B cell (primary cell): ENCODE measurements at regions of chr20 and their contacts with region 1.

Region 1: DNA sequence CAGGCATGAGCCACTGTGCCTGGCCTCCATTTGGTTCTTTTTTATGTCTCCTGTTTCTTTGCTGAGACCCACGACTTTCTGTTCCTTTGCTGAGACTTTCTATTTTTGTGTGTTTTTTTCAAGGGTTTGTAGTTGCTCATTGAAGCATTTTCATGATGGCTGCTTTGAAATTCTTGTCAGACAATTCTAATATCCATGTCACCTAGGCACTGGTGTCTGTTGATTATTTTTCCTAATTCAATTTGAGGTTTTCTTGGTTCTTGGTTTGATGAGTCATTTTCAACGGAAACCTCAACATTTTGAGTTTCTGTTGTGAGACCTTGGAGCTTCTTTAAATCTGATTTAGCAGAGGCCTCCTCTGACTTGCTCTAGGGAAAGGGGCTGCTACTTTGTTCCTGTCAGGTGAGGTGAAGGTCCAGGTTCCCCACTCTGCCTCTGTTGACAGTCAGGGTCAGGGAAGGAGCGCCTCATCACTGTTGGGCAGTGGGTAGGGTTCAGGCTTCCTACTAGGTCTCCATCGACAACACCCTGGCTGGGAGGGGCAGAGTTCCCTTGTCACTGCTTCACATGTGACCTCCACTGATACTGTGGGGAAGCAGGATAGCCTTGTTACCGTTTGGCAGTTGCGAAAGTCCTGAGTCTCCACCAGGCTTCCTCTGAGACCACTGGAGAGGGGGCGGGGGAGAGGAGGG is 67.2 kb upstream of the RNF24 start:
- DNase-seq: peak; percentile 39
- ATAC-seq: peak; percentile 50
- H3K4me3 ChIP-seq: peak overlapping the region in 1 of 5 experiments; percentile 15
- H3K4me3 Mint-ChIP-seq: peak overlapping the region; percentile 70
- H3K27ac ChIP-seq: peak overlapping the region; percentile 3 to 11
- H3K27ac Mint-ChIP-seq: peak overlapping the region; percentile 74
- H3K4me1 ChIP-seq: peaks cover 17 to 23% of the 10 kb centered on the region in 2 donors
- H3K4me1 Mint-ChIP-seq: peaks cover 31% of the 10 kb centered on the region
- H3K27me3 ChIP-seq: no peaks in the 10 kb centered on the region
- H3K27me3 Mint-ChIP-seq: peaks cover 23% of the 10 kb centered on the region
- CTCF ChIP-seq: no peak

Region 2: DNA sequence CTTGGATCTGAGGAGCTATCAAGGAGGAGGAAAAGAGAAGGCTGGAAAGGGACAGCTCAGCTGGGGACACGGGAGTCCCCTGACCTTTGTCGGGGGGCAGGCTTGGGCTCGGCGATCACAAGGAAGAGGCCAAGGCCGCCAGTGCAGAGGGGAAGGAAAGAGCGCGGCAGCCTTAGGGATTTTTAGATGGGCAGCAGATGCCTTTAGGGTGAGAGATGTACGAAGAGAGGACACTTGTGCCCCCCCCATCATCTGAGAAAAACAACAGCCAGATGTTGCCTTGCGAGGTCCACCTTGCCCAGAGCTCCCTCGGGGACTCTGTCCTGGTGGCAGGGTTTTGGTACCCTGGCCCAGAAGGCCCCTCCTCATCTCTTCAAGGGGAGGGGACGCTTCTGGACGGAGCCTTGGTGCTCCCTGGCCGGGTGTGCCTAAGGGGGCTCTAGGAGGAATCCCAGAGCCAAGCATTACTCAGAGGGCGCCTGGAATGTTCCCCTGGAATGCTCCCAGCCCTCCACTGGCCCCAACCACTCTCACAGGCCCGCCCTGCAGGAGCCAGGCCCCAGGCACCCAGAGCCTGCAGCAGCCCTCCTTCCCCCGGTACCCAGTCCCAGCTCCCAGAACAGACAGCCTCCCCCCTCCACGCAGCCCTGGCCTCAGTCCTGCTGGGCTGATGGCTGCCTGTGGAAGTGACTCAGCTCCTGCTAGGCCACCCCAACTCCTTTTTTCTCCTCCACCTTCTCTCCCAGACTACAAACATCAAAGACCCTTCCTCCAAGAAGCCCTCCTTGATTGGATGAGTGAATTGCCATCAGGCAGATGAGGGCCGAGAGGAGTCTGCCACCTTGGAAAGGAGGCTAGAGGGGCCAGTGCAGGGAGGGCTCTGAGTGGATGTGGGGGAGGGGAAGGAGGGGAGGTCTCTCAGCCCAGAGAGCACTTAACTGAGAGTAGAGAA is 402.5 kb before region 1 on chr20:
- CTCF ChIA-PET with region 1: interaction called, 20 read pairs
- POLR2A ChIA-PET with region 1: no interaction called
- intact Hi-C with region 1: no loop called
- DNase-seq: no peak
- ATAC-seq: no peak
- H3K4me3 ChIP-seq: no peak overlapping the region
- H3K4me3 Mint-ChIP-seq: no peak overlapping the region
- H3K27ac ChIP-seq: no peak overlapping the region
- H3K27ac Mint-ChIP-seq: no peak overlapping the region
- H3K4me1 ChIP-seq: peaks cover 0 to 7% of the 10 kb centered on the region in 2 donors
- H3K4me1 Mint-ChIP-seq: peaks cover 4% of the 10 kb centered on the region
- H3K27me3 ChIP-seq: peaks cover 0 to 38% (median 6%) of the 10 kb centered on the region in 4 experiments
- H3K27me3 Mint-ChIP-seq: peaks cover 57% of the 10 kb centered on the region
- CTCF ChIP-seq: no peak

Region 3: GRCh38 chr20:3753098-3753980 is 329.2 kb before region 1 on chr20:
- CTCF ChIA-PET with region 1: interaction called, 7 read pairs
- POLR2A ChIA-PET with region 1: no interaction called
- intact Hi-C with region 1: loop called (anchors 1 kb)
- DNase-seq: peak; percentile 72
- ATAC-seq: peak; percentile 59
- H3K4me3 ChIP-seq: no peak overlapping the region
- H3K4me3 Mint-ChIP-seq: peak overlapping the region; percentile 37
- H3K27ac ChIP-seq: no peak overlapping the region
- H3K27ac Mint-ChIP-seq: peak overlapping the region; percentile 67
- H3K4me1 ChIP-seq: peaks cover 0 to 12% of the 10 kb centered on the region in 2 donors
- H3K4me1 Mint-ChIP-seq: peaks cover 7% of the 10 kb centered on the region
- H3K27me3 ChIP-seq: no peaks in the 10 kb centered on the region
- H3K27me3 Mint-ChIP-seq: no peaks in the 10 kb centered on the region
- CTCF ChIP-seq: peak; percentile 75

Region 4: DNA sequence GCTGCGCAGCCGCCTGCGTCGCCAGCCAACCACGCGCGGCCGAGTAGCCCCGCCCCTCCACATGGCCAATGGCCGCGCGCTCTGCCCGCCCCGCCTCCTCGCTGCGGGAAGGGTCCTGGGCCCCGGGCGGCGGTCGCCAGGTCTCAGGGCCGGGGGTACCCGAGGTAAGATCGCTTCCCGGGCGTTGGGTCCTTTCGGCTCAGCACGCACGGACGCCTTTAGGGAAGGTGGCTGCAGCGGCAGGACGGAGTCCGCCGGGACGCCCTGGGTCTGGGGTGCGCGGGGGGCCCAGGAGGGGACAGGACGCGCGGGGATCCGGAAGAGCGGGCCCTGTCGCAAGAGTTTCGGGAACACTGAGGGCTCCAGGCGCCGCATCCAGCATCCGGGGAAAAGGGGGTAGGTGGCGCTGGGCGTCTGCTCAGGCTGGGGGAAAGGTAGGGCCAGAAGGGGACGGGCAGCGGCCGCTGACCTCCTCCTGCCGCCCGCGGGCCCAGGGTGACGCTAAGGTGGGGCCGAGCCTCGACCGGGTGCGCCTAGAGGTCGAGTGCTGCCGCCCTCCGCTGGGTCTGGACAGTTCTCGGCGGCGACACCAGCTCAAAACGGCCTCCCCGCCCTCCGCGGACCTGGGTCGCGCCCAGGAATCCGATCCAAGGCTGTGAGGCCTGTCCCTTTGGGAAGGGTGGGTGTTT is 235.7 kb before region 1 on chr20 and contains the start of gene MAVS:
- CTCF ChIA-PET with region 1: interaction called, 4 read pairs
- POLR2A ChIA-PET with region 1: no interaction called
- intact Hi-C with region 1: loop called (anchors 2 kb)
- DNase-seq: peak; percentile 88
- ATAC-seq: peak; percentile 98
- H3K4me3 ChIP-seq: peak within 1 kb of the TSS; percentile 59 to 93 (median 86)
- H3K4me3 Mint-ChIP-seq: peak within 1 kb of the TSS; percentile 90
- H3K27ac ChIP-seq: peak within 1 kb of the TSS; percentile 63 to 86
- H3K27ac Mint-ChIP-seq: peak within 1 kb of the TSS; percentile 87
- H3K4me1 ChIP-seq: peaks cover 8 to 18% of the 10 kb centered on the region in 2 donors
- H3K4me1 Mint-ChIP-seq: peaks cover 32% of the 10 kb centered on the region
- H3K27me3 ChIP-seq: no peaks in the 10 kb centered on the region
- H3K27me3 Mint-ChIP-seq: no peaks in the 10 kb centered on the region
- CTCF ChIP-seq: no peak
- total RNA-seq, gene MAVS: 52.2 and 53.3 TPM in 2 replicates

Region 5: GRCh38 chr20:4014031-4014474 is 68.5 kb before region 1 on chr20:
- CTCF ChIA-PET with region 1: interaction called, 56 read pairs
- POLR2A ChIA-PET with region 1: no interaction called
- intact Hi-C with region 1: no loop called
- DNase-seq: peak; percentile 55
- ATAC-seq: no peak
- H3K4me3 ChIP-seq: peak overlapping the region in 1 of 5 experiments; percentile 69
- H3K4me3 Mint-ChIP-seq: peak overlapping the region; percentile 78
- H3K27ac ChIP-seq: no peak overlapping the region
- H3K27ac Mint-ChIP-seq: peak overlapping the region; percentile 2
- H3K4me1 ChIP-seq: peaks cover 14 to 30% of the 10 kb centered on the region in 2 donors
- H3K4me1 Mint-ChIP-seq: peaks cover 28% of the 10 kb centered on the region
- H3K27me3 ChIP-seq: no peaks in the 10 kb centered on the region
- H3K27me3 Mint-ChIP-seq: no peaks in the 10 kb centered on the region
- CTCF ChIP-seq: peak; percentile 25